Spleen (tissue), 13 donors: ENCODE measurements at regions of chr6 and their contacts with region 1.

Region 1: GRCh38 chr6:25263657-25264056 is 15.5 kb upstream of the CARMIL1 start:
- DNase-seq: no peak
- H3K4me3 ChIP-seq: no peak overlapping the region
- H3K27ac ChIP-seq: no peak overlapping the region
- H3K4me1 ChIP-seq: peaks cover 0 to 7% (median 0%) of the 10 kb centered on the region in 6 donors
- H3K27me3 ChIP-seq: peaks cover 0 to 4% (median 0%) of the 10 kb centered on the region in 7 donors
- CTCF ChIP-seq: no peak
- POLR2A ChIP-seq: no peak

Region 2: DNA sequence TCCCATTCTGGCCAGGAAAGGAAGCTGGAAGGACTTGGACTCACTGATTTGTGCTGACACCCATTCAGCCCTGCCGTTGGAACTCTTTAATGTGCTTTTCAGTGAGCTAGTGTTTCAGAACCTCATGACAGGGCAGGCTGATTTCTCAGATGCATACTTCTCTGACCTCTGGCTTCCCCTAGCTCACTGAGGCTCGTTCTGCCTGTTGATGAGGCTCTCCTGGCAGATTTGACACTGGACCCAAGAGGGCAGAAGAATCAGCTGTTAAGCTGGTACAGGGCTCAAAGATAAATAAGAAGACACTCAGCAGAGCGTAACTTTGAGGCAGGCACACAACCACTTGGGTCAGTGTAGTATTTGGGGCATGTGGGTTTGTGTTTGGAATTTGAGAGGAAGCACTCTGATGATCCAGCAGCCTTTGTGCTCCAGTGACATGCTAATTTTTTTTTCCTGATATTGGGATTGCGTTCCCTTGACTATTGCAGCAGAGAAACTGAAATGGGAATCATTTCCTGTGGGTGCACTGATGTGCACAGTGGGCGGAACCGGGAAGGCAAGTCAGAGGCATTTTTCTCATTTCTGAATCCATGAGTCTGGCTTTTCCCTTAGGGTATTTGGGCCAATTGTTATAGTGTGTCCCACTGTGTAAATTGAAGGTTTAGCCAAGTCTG is 95.7 kb after region 1 on chr6:
- intact Hi-C with region 1: no loop called
- DNase-seq: no peak
- H3K4me3 ChIP-seq: no peak overlapping the region
- H3K27ac ChIP-seq: peak overlapping the region in 1 of 8 donors; percentile 2
- H3K4me1 ChIP-seq: peaks cover 0 to 25% (median 3%) of the 10 kb centered on the region in 6 donors
- H3K27me3 ChIP-seq: no peaks in the 10 kb centered on the region
- CTCF ChIP-seq: no peak
- POLR2A ChIP-seq: no peak

Region 3: DNA sequence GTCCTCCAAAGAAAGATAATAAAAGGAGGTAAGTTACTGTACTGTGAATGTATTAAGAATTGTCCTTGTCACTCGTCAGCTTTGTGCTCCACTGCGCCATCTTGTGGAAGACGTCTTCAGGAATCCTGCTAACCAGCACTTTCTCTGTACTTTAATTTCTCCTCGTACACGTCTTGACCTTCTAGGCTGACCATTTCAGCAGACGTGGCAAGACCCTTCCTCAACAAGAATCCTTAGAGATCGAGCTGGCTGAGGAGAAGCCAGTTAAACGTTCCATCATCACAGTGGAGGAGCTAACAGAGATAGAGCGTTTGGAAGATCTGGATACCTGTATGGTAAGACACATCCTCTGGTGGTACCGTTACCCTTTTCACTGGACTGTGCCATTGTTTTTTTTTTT is 292.9 kb after region 1 on chr6:
- intact Hi-C with region 1: loop called (anchors 5 kb)
- DNase-seq: peak; percentile 84
- H3K4me3 ChIP-seq: no peak overlapping the region
- H3K27ac ChIP-seq: no peak overlapping the region
- H3K4me1 ChIP-seq: peaks cover 0 to 4% (median 0%) of the 10 kb centered on the region in 6 donors
- H3K27me3 ChIP-seq: no peaks in the 10 kb centered on the region
- CTCF ChIP-seq: peak; percentile 41 to 79 (median 73)
- POLR2A ChIP-seq: no peak

Region 4: GRCh38 chr6:25601800-25602673 is 338.4 kb after region 1 on chr6:
- intact Hi-C with region 1: loop called (anchors 10 kb)
- DNase-seq: no peak
- H3K4me3 ChIP-seq: no peak overlapping the region
- H3K27ac ChIP-seq: no peak overlapping the region
- H3K4me1 ChIP-seq: no peaks in the 10 kb centered on the region
- H3K27me3 ChIP-seq: no peaks in the 10 kb centered on the region
- CTCF ChIP-seq: peak in 10 of 11 experiments; percentile 19 to 61 (median 48)
- POLR2A ChIP-seq: no peak